ENCODE measurements at regions of chr4 and their contacts with region 1.

Region 1: DNA sequence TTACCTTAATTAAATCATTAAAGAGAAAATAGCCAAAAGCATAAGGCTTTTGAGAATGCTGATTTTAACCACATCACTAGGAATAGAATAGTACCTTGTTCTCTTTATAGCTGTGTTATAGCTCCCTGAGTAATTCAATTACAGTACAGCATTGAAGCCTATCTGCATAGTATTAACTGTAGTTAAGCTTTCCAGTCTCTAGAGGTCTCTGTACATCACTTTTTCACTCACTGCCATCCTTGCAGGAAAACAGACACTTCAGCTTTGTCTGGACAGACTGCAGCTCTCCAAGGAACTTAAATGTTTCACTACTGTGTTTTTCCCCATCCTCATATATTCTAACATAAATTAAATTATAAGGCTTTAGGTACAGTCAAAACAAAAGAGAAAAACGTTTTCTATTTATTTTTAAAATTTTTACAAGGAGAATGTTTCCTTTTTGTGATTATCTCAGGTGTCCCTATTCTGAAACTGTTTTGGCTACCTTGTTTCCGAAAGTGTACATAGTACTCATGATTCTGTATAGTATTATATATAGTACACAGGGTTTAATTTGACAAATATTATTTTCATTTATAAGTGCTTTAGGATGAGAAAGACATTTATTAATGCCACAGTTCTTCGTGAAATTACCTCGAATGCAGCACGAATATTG is 407.9 kb downstream of the PCDH18 start:
- DNase-seq: peak in 1 of 2 donors; percentile 5
- ATAC-seq: peak; percentile 78 to 97 (median 88)
- H3K4me3 ChIP-seq: peak overlapping the region; percentile 2 to 52 (median 30)
- H3K27ac ChIP-seq: peak overlapping the region in 1 of 10 donors; percentile 14
- H3K4me1 ChIP-seq: no peaks in the 10 kb centered on the region
- H3K27me3 ChIP-seq: no peaks in the 10 kb centered on the region
- CTCF ChIP-seq: peak in 8 of 9 donors; percentile 16 to 80 (median 64)

Region 2: GRCh38 chr4:137861682-137862081 is 737.3 kb after region 1 on chr4:
- intact Hi-C with region 1: loop called in 8 of 10 experiments (anchors 2 to 10 kb)
- DNase-seq: no peak
- ATAC-seq: no peak
- H3K4me3 ChIP-seq: no peak overlapping the region
- H3K27ac ChIP-seq: no peak overlapping the region
- H3K4me1 ChIP-seq: no peaks in the 10 kb centered on the region
- H3K27me3 ChIP-seq: no peaks in the 10 kb centered on the region
- CTCF ChIP-seq: peak in 7 of 9 donors; percentile 41 to 69 (median 51)

Region 3: GRCh38 chr4:138090150-138090917 is 965.9 kb after region 1 on chr4:
- intact Hi-C with region 1: loop called in 2 of 10 experiments (anchors 5 to 10 kb)
- DNase-seq: peak; percentile 14 to 61
- ATAC-seq: peak; percentile 65 to 85 (median 80)
- H3K4me3 ChIP-seq: peak overlapping the region in 4 of 10 donors; percentile 24 to 26 (median 25)
- H3K27ac ChIP-seq: no peak overlapping the region
- H3K4me1 ChIP-seq: peaks cover 0 to 8% (median 0%) of the 10 kb centered on the region in 9 donors
- H3K27me3 ChIP-seq: no peaks in the 10 kb centered on the region
- CTCF ChIP-seq: peak; percentile 73 to 85 (median 85)